ENCODE measurements at regions of chr17 and their contacts with region 1.

Region 1: DNA sequence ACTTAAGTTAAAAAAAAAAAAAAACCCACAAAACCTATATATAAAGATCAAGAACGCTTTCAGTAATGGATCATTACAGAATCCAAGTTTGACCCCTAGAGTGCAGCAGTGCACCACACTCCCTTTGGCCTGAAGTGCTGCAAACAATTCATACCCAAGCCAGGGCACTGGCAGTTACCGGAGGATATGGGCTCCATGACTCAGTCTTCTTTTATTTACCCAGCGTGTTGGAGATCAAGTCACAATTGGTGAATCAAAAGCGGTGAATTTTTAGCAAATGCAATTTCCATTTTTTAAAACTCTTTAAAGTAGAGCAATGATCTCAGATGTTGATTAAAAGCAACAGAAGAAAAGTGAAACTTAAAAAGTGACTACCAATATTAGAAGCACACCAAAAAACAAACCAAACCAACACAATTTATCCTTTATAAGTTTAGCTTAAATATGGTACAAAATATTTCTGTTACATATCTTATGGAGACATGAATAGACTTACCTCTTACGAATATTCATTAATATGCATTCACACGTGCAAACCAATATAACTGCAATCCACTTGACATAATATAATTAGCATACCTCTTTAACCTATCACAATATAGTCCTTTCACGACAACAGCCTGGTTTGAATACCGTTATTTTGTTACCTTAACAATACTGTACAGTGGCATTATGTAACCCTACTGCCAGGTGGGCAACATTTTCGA is 46.3 kb downstream of the ZNF652 start:
- DNase-seq: peak; percentile 14
- H3K4me3 ChIP-seq: no peak overlapping the region
- H3K27ac ChIP-seq: peak overlapping the region in 1 of 4 donors; percentile 19
- H3K4me1 ChIP-seq: peaks cover 5 to 19% (median 6%) of the 10 kb centered on the region in 3 donors
- H3K27me3 ChIP-seq: no peaks in the 10 kb centered on the region
- CTCF ChIP-seq: peak; percentile 57 to 86 (median 74)
- POLR2A ChIP-seq: no peak

Region 2: DNA sequence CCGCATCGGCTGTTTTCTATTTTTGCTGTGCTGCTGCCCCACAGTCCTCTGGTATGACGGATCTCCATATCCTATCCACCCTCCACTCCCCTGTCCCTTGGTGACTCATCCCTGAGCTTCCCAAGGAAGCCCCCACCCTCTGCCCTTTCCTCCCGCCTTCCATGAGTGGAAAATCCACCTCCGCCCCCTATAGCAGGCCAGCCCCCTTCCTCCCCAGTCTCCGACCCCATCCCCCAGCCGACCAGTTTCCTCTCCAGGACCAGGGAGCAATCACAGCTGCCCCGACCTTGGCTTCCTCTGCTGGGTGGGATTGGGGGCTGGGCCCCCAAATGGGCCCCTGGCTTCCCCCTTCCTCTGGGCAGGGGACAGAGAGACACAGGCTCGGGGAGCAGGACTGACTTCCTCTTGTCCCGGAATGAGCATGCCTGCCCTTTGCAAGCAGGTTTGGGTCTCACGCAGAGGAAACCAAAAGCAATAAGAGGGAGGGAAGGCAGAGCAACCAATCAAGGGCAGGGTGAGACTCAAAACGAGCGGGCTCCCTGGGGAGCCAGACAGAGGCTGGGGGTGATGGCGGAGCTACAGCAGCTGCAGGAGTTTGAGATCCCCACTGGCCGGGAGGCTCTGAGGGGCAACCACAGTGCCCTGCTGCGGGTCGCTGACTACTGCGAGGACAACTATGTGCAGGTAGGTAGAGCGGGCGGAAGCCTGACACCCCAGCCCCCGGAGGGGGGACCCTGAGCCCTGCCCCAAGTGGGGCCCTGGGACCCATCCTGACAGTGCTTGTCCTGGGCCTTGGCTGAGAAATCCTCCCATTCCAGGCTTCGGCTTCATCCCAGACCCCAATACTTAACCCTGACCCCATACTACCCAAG is 105.3 kb before region 1 on chr17 and contains the starts of genes ABI3 and GNGT2:
- intact Hi-C with region 1: no loop called
- DNase-seq: no peak
- H3K4me3 ChIP-seq: peak within 1 kb of the TSS; percentile 25 to 65 (median 46)
- H3K27ac ChIP-seq: peak within 1 kb of the TSS; percentile 66 to 85 (median 78)
- H3K4me1 ChIP-seq: peaks cover 0 to 45% (median 11%) of the 10 kb centered on the region in 3 donors
- H3K27me3 ChIP-seq: peaks cover 0 to 51% (median 0%) of the 10 kb centered on the region in 4 donors
- CTCF ChIP-seq: no peak
- POLR2A ChIP-seq: peak in 2 of 4 donors; percentile 50 to 80
- total RNA-seq, gene ABI3: 1.5 to 8.8 (median 4.2) TPM
- total RNA-seq, gene GNGT2: 1.4 to 1.7 TPM in 2 of 4 donors, not detected in the others

Region 3: GRCh38 chr17:49260011-49260921 is 55.4 kb before region 1 on chr17:
- intact Hi-C with region 1: no loop called
- DNase-seq: no peak
- H3K4me3 ChIP-seq: peak overlapping the region; percentile 49 to 74 (median 58)
- H3K27ac ChIP-seq: peak overlapping the region; percentile 64 to 86 (median 76)
- H3K4me1 ChIP-seq: peaks cover 0 to 22% (median 5%) of the 10 kb centered on the region in 3 donors
- H3K27me3 ChIP-seq: peaks cover 0 to 7% (median 0%) of the 10 kb centered on the region in 4 donors
- CTCF ChIP-seq: no peak
- POLR2A ChIP-seq: peak in 1 of 4 donors; percentile 19

Region 4: GRCh38 chr17:49393491-49394255 is 78.0 kb after region 1 on chr17:
- intact Hi-C with region 1: loop called (anchors 2 kb)
- DNase-seq: no peak
- H3K4me3 ChIP-seq: no peak overlapping the region
- H3K27ac ChIP-seq: no peak overlapping the region
- H3K4me1 ChIP-seq: peaks cover 10 to 52% (median 23%) of the 10 kb centered on the region in 3 donors
- H3K27me3 ChIP-seq: no peaks in the 10 kb centered on the region
- CTCF ChIP-seq: no peak
- POLR2A ChIP-seq: no peak

Measured in esophagus squamous epithelium (tissue), 5 donors.